HEK293 (cell line): ENCODE measurements at regions of chr2 and their contacts with region 1.

Region 1: DNA sequence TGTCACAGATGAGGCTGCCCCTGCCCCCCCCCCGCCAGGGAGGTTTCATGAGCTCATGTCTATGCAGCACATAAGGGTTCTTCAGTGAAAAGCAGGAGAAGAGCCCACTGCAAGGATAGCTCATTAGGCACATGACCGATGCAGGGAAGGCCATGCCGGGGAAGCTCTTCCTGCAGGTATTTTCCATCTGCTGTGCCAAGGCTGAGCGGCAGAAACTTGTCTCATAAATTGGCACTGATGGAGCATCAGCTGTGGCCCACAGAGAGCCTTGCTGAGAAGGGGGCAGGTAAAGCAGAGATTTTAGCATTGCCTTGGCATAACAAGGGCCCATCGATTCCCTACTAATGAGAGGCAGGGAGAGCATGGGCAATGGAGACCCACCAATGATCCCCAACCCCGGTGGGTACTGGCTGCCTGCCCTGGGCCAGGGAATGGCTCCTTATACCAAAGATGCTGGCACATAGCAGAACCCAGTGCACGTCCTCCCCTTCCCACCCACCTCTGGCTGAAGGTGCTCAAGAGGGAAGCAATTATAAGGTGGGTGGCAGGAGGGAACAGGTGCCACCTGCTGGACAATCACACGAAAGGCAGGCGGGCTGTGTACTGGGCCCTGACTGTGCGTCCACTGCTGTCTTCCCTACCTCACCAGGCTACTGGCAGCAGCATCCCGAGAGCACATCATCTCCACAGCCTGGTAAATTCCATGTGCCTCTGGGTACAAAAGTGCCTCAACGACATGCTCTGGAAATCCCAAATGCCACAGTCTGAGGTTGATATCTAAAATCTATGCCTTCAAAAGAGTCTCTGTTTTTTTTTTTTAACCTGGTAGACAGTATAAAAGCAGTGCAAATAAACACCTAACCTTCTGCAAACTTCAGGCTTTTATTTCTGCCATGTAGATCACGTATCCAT is 41.4 kb downstream of the STEAP3 start:
- H3K4me3 ChIP-seq: no peak overlapping the region
- H3K27ac ChIP-seq: no peak overlapping the region
- H3K4me1 ChIP-seq: no peaks in the 10 kb centered on the region
- CTCF ChIP-seq: peak; percentile 78

Region 2: DNA sequence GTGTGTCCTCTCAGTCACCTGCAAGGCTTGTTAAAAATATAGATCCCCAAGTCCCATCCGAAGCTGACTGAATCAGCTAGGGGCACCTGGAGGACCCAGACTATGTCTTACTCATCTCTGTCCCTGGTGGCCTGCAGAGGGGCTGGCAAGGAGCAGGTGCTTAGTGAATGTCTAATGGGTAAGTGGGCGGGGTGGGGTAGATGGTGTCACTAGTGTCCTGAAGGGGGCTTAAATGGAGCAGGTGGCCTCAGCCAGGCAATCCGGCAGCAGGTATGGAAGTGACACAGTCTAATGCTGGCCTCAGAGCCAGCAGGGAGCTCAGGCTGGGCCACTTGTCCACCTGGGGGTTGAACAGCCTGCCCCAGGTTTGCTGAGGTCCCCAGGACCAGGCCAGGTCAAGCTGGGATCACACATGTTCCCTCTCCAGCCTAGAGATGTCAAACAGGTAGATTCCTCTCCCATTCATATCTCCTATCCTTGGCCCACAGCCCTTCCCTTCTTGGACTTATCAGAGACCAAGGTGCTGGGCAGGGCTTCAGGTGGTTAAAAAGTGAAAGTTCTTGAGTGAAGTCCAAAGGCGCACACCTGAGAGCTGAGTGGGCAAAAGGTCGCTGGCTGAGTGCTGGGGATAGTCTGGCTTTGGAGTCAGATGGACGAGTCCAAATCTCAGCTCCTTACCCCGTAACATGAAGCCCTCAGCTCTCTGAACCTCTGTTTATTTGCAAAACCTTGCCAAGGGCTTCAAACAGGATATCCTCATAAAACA is 39.7 kb before region 1 on chr2:
- CTCF ChIA-PET with region 1: interaction called, 53 read pairs
- POLR2A ChIA-PET with region 1: interaction called, 5 read pairs
- H3K4me3 ChIP-seq: no peak overlapping the region
- H3K27ac ChIP-seq: no peak overlapping the region
- H3K4me1 ChIP-seq: peaks cover 6% of the 10 kb centered on the region; the same call in 1 of the 2 replicates
- CTCF ChIP-seq: peak; percentile 47